Cardiac septum (tissue), 1 donor: ENCODE measurements at regions of chr7 and their contacts with region 1.

Region 1: GRCh38 chr7:35185907-35186731 is 67.8 kb downstream of the TBX20 start:
- DNase-seq: peak; percentile 78

Region 2: DNA sequence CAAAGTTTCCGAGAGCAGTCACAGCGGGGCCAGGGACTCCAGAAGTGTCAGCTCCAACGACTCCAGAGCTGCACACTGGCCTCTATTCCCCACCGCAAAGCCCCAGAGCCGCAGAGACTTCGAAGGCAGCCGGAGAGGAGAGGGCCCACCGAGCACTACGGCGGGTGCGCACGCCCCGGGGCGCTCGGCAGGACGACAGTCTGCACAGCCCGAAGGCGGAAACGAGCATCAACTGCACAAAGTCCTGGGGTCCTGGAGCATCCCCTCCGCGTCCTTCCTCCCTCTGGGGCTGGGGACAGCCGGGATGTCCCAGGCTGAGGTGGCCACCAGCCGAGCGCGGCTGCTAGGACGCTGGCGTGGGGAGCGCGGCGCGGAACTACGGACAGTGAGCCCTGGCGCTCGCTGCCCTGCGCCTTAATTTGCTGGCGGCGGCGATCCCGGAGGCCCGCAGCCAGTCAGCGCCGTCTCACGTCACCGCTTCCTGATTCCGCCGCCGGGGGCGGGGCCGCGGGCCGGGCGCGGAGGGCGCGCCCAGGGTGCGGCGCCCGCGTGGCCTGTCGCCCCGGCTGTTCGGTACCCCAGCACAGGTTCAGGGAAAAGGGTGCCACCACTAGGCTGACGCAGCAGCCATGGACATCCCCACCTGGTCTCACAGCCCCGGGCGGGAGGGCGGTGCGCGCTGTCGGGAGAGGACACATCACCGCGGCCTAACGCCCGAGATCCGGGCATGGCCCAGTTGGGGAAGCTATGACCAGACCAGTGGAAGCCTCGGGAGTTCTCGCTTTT is 67.8 kb after region 1 on chr7 and contains the start of gene TBX20:
- intact Hi-C with region 1: loop called (anchors 5 kb)
- DNase-seq: no peak
- total RNA-seq, gene TBX20: 58.0 TPM

Region 3: GRCh38 chr7:35519971-35520809 is 334.1 kb after region 1 on chr7:
- intact Hi-C with region 1: loop called (anchors 5 kb)
- DNase-seq: peak; percentile 84

Region 4: GRCh38 chr7:35537067-35538023 is 351.2 kb after region 1 on chr7:
- intact Hi-C with region 1: loop called (anchors 5 kb)
- DNase-seq: peak; percentile 85